ENCODE measurements at regions of chr18 and their contacts with region 1.

Region 1: GRCh38 chr18:35415511-35416073 is 38.5 kb upstream of the ZNF396 start:
- DNase-seq: no peak
- H3K4me3 ChIP-seq: no peak overlapping the region
- H3K27ac ChIP-seq: no peak overlapping the region
- H3K4me1 ChIP-seq: peaks cover 0 to 2% of the 10 kb centered on the region in 2 donors
- H3K27me3 ChIP-seq: no peaks in the 10 kb centered on the region
- CTCF ChIP-seq: no peak
- POLR2A ChIP-seq: no peak

Region 2: GRCh38 chr18:35215026-35215425 is 200.6 kb before region 1 on chr18:
- intact Hi-C with region 1: no loop called
- DNase-seq: no peak
- H3K4me3 ChIP-seq: no peak overlapping the region
- H3K27ac ChIP-seq: no peak overlapping the region
- H3K4me1 ChIP-seq: no peaks in the 10 kb centered on the region
- H3K27me3 ChIP-seq: no peaks in the 10 kb centered on the region
- CTCF ChIP-seq: no peak
- POLR2A ChIP-seq: no peak

Region 3: GRCh38 chr18:35513181-35513936 is 97.8 kb after region 1 on chr18:
- intact Hi-C with region 1: loop called (anchors 10 kb)
- DNase-seq: peak; percentile 44 to 50
- H3K4me3 ChIP-seq: no peak overlapping the region
- H3K27ac ChIP-seq: peak overlapping the region in 1 of 3 donors; percentile 33
- H3K4me1 ChIP-seq: peaks cover 7 to 10% of the 10 kb centered on the region in 2 donors
- H3K27me3 ChIP-seq: no peaks in the 10 kb centered on the region
- CTCF ChIP-seq: no peak
- POLR2A ChIP-seq: no peak